A673 (cell line): ENCODE measurements at regions of chr4 and their contacts with region 1.

Region 1: GRCh38 chr4:33369446-33369845 is 2649.3 kb downstream of the PCDH7 start:
- DNase-seq: peak; percentile 30
- H3K4me3 ChIP-seq: no peak overlapping the region
- H3K27ac ChIP-seq: no peak overlapping the region
- H3K4me1 ChIP-seq: no peaks in the 10 kb centered on the region
- H3K27me3 ChIP-seq: no peaks in the 10 kb centered on the region
- CTCF ChIP-seq: no peak

Region 2: GRCh38 chr4:33551244-33551643 is 181.8 kb after region 1 on chr4:
- CTCF ChIA-PET with region 1: no interaction called
- POLR2A ChIA-PET with region 1: no interaction called
- intact Hi-C with region 1: loop called (anchors 10 kb)
- DNase-seq: no peak
- H3K4me3 ChIP-seq: no peak overlapping the region
- H3K27ac ChIP-seq: no peak overlapping the region
- H3K4me1 ChIP-seq: no peaks in the 10 kb centered on the region
- H3K27me3 ChIP-seq: no peaks in the 10 kb centered on the region
- CTCF ChIP-seq: no peak